ENCODE measurements at regions of chr16 and their contacts with region 1.

Region 1: DNA sequence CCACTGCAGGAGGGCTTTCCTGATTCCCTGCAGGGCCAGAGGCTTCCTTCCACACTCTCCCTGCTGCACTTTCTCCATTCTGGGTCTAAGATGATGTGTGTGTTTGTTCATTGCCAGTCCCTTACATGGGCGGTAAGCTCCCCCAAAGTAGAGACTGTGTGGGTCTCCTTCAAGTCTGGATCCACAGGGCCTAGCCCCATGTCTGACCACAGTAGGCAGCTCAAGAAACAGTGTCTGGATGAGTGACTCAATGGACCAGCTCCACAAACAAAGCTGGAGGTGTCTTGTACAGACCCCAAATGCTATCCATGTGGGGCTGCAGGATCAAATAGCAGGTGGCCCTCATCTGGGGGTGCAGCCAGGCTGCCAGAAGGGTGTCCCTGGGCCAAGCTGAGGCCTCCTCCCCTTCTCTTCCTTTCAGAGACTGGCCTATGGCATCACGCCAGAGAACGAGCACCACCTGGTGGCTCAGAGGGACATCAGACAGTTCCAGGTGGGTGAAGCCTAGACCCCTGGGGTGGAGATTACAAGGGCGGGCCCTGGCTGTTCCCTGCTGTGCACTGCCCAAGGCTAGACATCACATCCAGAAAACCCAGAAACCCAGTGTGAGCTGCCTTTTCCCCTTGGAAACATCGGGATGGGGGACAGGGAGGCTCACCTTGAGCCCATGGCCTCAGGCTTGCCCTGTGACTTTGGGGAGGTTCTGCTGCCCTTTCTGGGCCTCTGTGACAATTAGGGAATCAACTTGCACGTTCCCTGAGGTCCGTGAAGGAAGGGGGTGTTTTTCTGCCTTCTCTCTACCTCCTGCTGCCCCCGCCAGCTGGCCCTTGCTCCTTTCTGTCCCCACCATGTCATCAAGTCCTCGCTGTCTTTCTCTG is 45.9 kb downstream of the SLC6A2 start:
- DNase-seq: peak in 2 of 3 donors; percentile 61 to 66
- ATAC-seq: peak; percentile 61
- H3K4me3 ChIP-seq: no peak overlapping the region
- H3K4me1 ChIP-seq: no peaks in the 10 kb centered on the region
- CTCF ChIP-seq: no peak

Region 2: DNA sequence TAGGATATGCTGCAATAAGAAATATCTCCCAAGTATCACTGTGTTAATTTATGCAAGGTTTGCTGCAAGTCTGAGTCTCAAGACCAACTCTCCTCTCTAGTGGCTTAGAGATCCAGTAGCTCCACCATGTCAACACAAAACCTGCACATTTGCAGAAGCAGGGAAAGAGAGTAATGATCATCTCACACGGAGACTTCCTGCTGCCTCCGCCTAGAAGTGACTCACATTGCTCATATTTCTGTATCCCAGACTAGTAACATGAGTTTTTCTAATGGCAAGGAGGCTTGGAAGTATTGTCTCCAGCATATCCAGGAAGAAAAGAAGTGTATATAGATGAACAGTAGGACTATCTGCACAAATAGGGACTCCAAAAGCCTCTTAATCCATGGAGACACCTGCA is 392.7 kb before region 1 on chr16:
- intact Hi-C with region 1: no loop called
- DNase-seq: no peak
- ATAC-seq: no peak
- H3K4me3 ChIP-seq: no peak overlapping the region
- H3K4me1 ChIP-seq: no peaks in the 10 kb centered on the region
- CTCF ChIP-seq: no peak

Region 3: GRCh38 chr16:55543472-55543871 is 158.2 kb before region 1 on chr16:
- intact Hi-C with region 1: loop called in 1 of 2 experiments (anchors 10 kb)
- DNase-seq: no peak
- ATAC-seq: no peak
- H3K4me3 ChIP-seq: no peak overlapping the region
- H3K4me1 ChIP-seq: no peaks in the 10 kb centered on the region
- CTCF ChIP-seq: no peak